H1 (cell line): ENCODE measurements at regions of chr16 and their contacts with region 1.

Region 1: GRCh38 chr16:81891736-81892357 is 112.8 kb downstream of the PLCG2 start:
- DNase-seq: no peak
- H3K4me3 ChIP-seq: no peak overlapping the region
- H3K27ac ChIP-seq: no peak overlapping the region
- H3K4me1 ChIP-seq: peaks cover 0 to 3% (median 1%) of the 10 kb centered on the region in 4 experiments; a peak in 3 of 7 replicates
- H3K27me3 ChIP-seq: no peaks in the 10 kb centered on the region
- CTCF ChIP-seq: no peak
- EP300 ChIP-seq: no peak
- POLR2A ChIP-seq: no peak
- RAD21 ChIP-seq: no peak

Region 2: GRCh38 chr16:81879625-81880024 is 12.2 kb before region 1 on chr16:
- CTCF ChIA-PET with region 1: interaction called, 77 read pairs
- POLR2A ChIA-PET with region 1: no interaction called
- DNase-seq: no peak
- H3K4me3 ChIP-seq: no peak overlapping the region
- H3K27ac ChIP-seq: no peak overlapping the region
- H3K4me1 ChIP-seq: peaks cover 4 to 14% (median 8%) of the 10 kb centered on the region in 4 experiments
- H3K27me3 ChIP-seq: no peaks in the 10 kb centered on the region
- CTCF ChIP-seq: peak; percentile 37 to 83 (median 80)
- EP300 ChIP-seq: no peak
- POLR2A ChIP-seq: no peak
- RAD21 ChIP-seq: peak in 1 of 2 experiments; percentile 21; a peak in 1 of 4 replicates

Region 3: DNA sequence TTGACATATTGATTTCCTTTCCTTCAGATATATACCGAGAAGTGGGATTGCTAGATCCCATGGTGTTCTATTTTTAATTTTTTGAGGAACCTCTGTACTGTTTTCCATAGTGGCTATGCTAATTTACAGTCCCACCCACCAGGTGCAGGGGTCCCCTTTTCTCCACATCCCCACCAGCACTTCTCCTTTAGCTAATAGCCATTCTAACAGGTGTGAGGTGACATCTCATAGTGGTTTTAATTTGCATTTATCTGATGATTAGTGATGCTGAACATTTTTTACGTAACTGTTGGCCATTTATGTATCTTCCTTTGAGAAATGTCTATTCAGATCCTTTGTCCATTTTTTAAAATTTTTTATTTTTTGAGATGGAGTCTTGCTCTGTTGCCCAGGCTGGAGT is 25.5 kb after region 1 on chr16:
- CTCF ChIA-PET with region 1: interaction called, 13 read pairs
- POLR2A ChIA-PET with region 1: no interaction called
- DNase-seq: no peak
- H3K4me3 ChIP-seq: no peak overlapping the region
- H3K27ac ChIP-seq: no peak overlapping the region
- H3K4me1 ChIP-seq: peaks cover 0 to 3% (median 0%) of the 10 kb centered on the region in 4 experiments; a peak in 1 of 7 replicates
- H3K27me3 ChIP-seq: no peaks in the 10 kb centered on the region
- CTCF ChIP-seq: no peak
- EP300 ChIP-seq: no peak
- POLR2A ChIP-seq: no peak
- RAD21 ChIP-seq: no peak